CD4-positive, alpha-beta T cell (primary cell): ENCODE measurements at regions of chr17 and their contacts with region 1.

Region 1: GRCh38 chr17:16537130-16537458 is 31.9 kb downstream of the ZNF287 start:
- DNase-seq: peak in 1 of 14 experiments; percentile 21
- ATAC-seq: no peak
- H3K4me3 ChIP-seq: no peak overlapping the region
- H3K4me3 Mint-ChIP-seq: peak overlapping the region; percentile 93
- H3K27ac ChIP-seq: no peak overlapping the region
- H3K27ac Mint-ChIP-seq: peak overlapping the region; percentile 81
- H3K4me1 ChIP-seq: peaks cover 19% of the 10 kb centered on the region
- H3K4me1 Mint-ChIP-seq: peaks cover 13% of the 10 kb centered on the region
- H3K27me3 ChIP-seq: no peaks in the 10 kb centered on the region
- H3K27me3 Mint-ChIP-seq: no peaks in the 10 kb centered on the region
- CTCF ChIP-seq: no peak

Region 2: GRCh38 chr17:16380640-16381495 is 156.2 kb before region 1 on chr17 and contains the start of gene UBB:
- CTCF ChIA-PET with region 1: no interaction called
- POLR2A ChIA-PET with region 1: interaction called, 15 read pairs
- intact Hi-C with region 1: no loop called
- DNase-seq: peak; percentile 89 to 99 (median 92)
- ATAC-seq: peak; percentile 95
- H3K4me3 ChIP-seq: peak within 1 kb of the TSS; percentile 87
- H3K4me3 Mint-ChIP-seq: peak within 1 kb of the TSS; percentile 91
- H3K27ac ChIP-seq: peak within 1 kb of the TSS; percentile 94 to 100
- H3K27ac Mint-ChIP-seq: peak within 1 kb of the TSS; percentile 97
- H3K4me1 ChIP-seq: peaks cover 33% of the 10 kb centered on the region
- H3K4me1 Mint-ChIP-seq: peaks cover 46% of the 10 kb centered on the region
- H3K27me3 ChIP-seq: no peaks in the 10 kb centered on the region
- H3K27me3 Mint-ChIP-seq: peaks cover 4% of the 10 kb centered on the region
- CTCF ChIP-seq: no peak
- total RNA-seq, gene UBB: 646 to 647 TPM

Region 3: GRCh38 chr17:16506188-16506587 is 30.9 kb before region 1 on chr17:
- CTCF ChIA-PET with region 1: no interaction called
- POLR2A ChIA-PET with region 1: no interaction called
- intact Hi-C with region 1: no loop called
- DNase-seq: no peak
- ATAC-seq: no peak
- H3K4me3 ChIP-seq: no peak overlapping the region
- H3K4me3 Mint-ChIP-seq: no peak overlapping the region
- H3K27ac ChIP-seq: no peak overlapping the region
- H3K27ac Mint-ChIP-seq: no peak overlapping the region
- H3K4me1 ChIP-seq: no peaks in the 10 kb centered on the region
- H3K4me1 Mint-ChIP-seq: no peaks in the 10 kb centered on the region
- H3K27me3 ChIP-seq: peaks cover 0 to 4% of the 10 kb centered on the region in 2 experiments
- H3K27me3 Mint-ChIP-seq: no peaks in the 10 kb centered on the region
- CTCF ChIP-seq: no peak

Region 4: GRCh38 chr17:16568541-16569357 is 31.7 kb after region 1 on chr17 and contains the start of gene ZNF287:
- CTCF ChIA-PET with region 1: interaction called, 7 read pairs
- POLR2A ChIA-PET with region 1: interaction called, 10 read pairs
- intact Hi-C with region 1: loop called in 1 of 2 experiments (anchors 1 kb)
- DNase-seq: peak; percentile 87 to 98 (median 92)
- ATAC-seq: peak; percentile 98
- H3K4me3 ChIP-seq: peak within 1 kb of the TSS; percentile 63
- H3K4me3 Mint-ChIP-seq: peak within 1 kb of the TSS; percentile 87
- H3K27ac ChIP-seq: peak within 1 kb of the TSS in 1 of 2 donors; percentile 29
- H3K27ac Mint-ChIP-seq: peak within 1 kb of the TSS; percentile 70
- H3K4me1 ChIP-seq: peaks cover 18% of the 10 kb centered on the region
- H3K4me1 Mint-ChIP-seq: peaks cover 13% of the 10 kb centered on the region
- H3K27me3 ChIP-seq: no peaks in the 10 kb centered on the region
- H3K27me3 Mint-ChIP-seq: peaks cover 4% of the 10 kb centered on the region
- CTCF ChIP-seq: no peak
- total RNA-seq, gene ZNF287: 6.9 to 7.8 TPM

Region 5: DNA sequence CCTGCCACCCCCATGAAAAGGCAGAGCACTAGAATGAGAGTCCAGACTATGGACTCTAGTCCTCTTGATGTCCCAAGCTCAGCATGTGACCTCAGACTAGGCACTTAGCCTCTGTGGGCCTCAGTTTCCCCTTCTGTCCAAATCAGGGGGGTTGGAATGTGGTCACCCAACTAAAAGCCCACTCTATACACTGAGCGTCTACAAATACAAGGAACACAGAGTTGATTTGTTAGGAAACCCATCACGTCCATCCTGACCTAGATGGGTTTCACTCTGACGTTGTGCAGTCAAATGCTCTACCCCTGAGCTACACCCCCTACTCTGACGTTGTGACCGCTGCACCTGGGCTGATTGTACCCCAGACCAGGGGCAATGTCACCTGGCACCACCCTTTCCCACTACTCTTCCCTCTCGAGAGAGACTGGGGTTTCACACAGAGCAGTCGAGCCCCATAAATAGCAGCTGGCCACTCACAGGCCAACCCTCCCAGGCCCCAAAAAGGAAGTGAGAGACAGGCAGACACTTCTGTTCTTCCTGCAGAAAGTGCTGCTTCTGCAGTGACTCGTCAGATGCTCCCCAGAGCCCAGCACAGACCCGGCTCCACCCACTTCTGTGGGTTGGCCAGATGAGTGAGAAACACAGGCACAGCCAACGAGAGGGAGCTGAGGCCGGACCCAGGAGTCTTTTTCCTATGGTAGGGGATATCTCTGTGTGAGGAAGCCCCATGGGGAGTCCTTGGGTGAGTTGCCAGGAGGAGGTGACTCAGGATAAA is 450.9 kb after region 1 on chr17:
- CTCF ChIA-PET with region 1: no interaction called
- POLR2A ChIA-PET with region 1: no interaction called
- intact Hi-C with region 1: loop called (anchors 1 to 5 kb)
- DNase-seq: peak; percentile 24 to 76 (median 46)
- ATAC-seq: peak; percentile 54
- H3K4me3 ChIP-seq: peak overlapping the region; percentile 29
- H3K4me3 Mint-ChIP-seq: peak overlapping the region; percentile 63
- H3K27ac ChIP-seq: peak overlapping the region in 1 of 2 donors; percentile 3
- H3K27ac Mint-ChIP-seq: peak overlapping the region; percentile 82
- H3K4me1 ChIP-seq: peaks cover 47% of the 10 kb centered on the region
- H3K4me1 Mint-ChIP-seq: peaks cover 44% of the 10 kb centered on the region
- H3K27me3 ChIP-seq: no peaks in the 10 kb centered on the region
- H3K27me3 Mint-ChIP-seq: no peaks in the 10 kb centered on the region
- CTCF ChIP-seq: no peak